Left ventricle myocardium inferior (tissue), 1 donor: ENCODE measurements at regions of chr3 and their contacts with region 1.

Region 1: DNA sequence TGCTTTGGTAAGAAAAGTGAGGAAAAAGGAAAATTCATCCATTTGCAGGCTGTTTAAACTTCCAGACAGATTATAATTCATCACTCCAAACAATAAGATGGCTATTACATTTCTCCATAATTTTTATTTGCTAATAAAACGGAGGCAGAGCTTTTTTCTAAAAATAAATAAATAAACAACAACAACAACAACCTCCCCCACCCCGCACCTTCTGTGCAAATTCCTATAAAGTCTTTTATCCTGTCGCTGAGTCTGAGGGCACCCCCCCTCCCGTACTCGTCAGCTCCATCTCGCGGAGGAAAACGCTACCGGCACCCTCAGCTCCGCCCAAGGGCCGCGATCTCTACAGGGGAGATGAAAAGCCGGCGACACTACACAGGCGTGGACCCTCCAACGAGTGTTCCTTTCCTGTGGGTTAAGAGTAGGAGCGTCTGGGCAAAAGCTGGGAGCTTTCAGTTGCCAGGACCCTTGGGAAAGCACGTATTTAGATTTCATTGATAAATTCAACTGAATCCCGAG is 1.0 kb upstream of the ATP1B3 start:
- DNase-seq: peak; percentile 87
- H3K4me3 ChIP-seq: peak overlapping the region; percentile 95
- H3K27ac ChIP-seq: peak overlapping the region; percentile 100
- H3K4me1 ChIP-seq: peaks cover 46% of the 10 kb centered on the region
- H3K27me3 ChIP-seq: no peaks in the 10 kb centered on the region
- CTCF ChIP-seq: peak; percentile 95

Region 2: GRCh38 chr3:141738022-141738890 is 137.2 kb before region 1 on chr3 and contains the start of gene RNF7:
- intact Hi-C with region 1: loop called (anchors 10 kb)
- DNase-seq: peak; percentile 94
- H3K4me3 ChIP-seq: peak within 1 kb of the TSS; percentile 93
- H3K27ac ChIP-seq: peak within 1 kb of the TSS; percentile 96
- H3K4me1 ChIP-seq: peaks cover 51% of the 10 kb centered on the region
- H3K27me3 ChIP-seq: no peaks in the 10 kb centered on the region
- CTCF ChIP-seq: peak; percentile 96
- total RNA-seq, gene RNF7: 89.6 TPM